GM13976 (cell line): ENCODE measurements at regions of chr1 and their contacts with region 1.

Region 1: GRCh38 chr1:94061513-94062443 is 59.2 kb downstream of the ABCA4 start:
- DNase-seq: peak; percentile 70
- CTCF ChIP-seq: peak; percentile 67

Region 2: GRCh38 chr1:94335950-94336349 is 274.2 kb after region 1 on chr1:
- in situ Hi-C with region 1: loop called (anchors 5 kb)
- DNase-seq: peak; percentile 38
- CTCF ChIP-seq: peak; percentile 60